Esophagus muscularis mucosa (tissue), 4 donors: ENCODE measurements at regions of chr7 and their contacts with region 1.

Region 1: DNA sequence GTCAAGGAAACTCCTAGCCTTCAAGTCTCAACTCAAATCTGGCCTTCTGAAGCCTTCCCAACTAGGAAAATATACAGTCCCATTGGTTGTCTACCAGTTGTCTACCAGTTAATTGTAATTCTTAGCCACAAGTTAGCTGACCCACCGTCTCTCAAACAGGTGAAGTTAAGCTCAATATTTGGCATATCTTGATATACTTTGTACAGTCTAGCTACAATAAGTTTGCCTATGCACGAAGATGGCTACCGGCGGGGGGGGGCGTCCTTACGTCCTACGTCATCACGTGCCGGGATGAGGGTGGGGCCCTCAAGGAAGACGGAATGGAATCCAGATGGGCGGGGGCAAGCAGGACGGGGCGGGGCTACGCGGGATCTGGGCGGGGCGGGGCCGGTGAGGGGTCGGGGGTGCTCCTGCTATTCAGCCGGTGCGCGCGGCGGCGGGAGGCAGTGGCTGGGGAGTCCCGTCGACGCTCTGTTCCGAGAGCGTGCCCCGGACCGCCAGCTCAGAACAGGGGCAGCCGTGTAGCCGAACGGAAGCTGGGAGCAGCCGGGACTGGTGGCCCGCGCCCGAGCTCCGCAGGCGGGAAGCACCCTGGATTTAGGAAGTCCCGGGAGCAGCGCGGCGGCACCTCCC is at the start of gene AHR:
- DNase-seq: peak; percentile 99
- H3K4me3 ChIP-seq: peak within 1 kb of the TSS; percentile 90 to 98 (median 93)
- H3K27ac ChIP-seq: peak within 1 kb of the TSS; percentile 92 to 97 (median 94)
- H3K4me1 ChIP-seq: peaks cover 11 to 27% (median 19%) of the 10 kb centered on the region in 4 donors
- H3K27me3 ChIP-seq: peaks cover 0 to 4% (median 0%) of the 10 kb centered on the region in 4 donors
- CTCF ChIP-seq: no peak
- EP300 ChIP-seq: no peak
- POLR2A ChIP-seq: peak; percentile 87
- total RNA-seq, gene AHR: 67.3 to 111 (median 77.8) TPM

Region 2: GRCh38 chr7:16634271-16634738 is 664.0 kb before region 1 on chr7:
- intact Hi-C with region 1: loop called (anchors 10 kb)
- DNase-seq: no peak
- H3K4me3 ChIP-seq: peak overlapping the region in 2 of 4 donors; percentile 16 to 37
- H3K27ac ChIP-seq: peak overlapping the region; percentile 39 to 71 (median 62)
- H3K4me1 ChIP-seq: peaks cover 36 to 58% (median 56%) of the 10 kb centered on the region in 4 donors
- H3K27me3 ChIP-seq: no peaks in the 10 kb centered on the region
- CTCF ChIP-seq: no peak
- EP300 ChIP-seq: no peak
- POLR2A ChIP-seq: no peak

Region 3: DNA sequence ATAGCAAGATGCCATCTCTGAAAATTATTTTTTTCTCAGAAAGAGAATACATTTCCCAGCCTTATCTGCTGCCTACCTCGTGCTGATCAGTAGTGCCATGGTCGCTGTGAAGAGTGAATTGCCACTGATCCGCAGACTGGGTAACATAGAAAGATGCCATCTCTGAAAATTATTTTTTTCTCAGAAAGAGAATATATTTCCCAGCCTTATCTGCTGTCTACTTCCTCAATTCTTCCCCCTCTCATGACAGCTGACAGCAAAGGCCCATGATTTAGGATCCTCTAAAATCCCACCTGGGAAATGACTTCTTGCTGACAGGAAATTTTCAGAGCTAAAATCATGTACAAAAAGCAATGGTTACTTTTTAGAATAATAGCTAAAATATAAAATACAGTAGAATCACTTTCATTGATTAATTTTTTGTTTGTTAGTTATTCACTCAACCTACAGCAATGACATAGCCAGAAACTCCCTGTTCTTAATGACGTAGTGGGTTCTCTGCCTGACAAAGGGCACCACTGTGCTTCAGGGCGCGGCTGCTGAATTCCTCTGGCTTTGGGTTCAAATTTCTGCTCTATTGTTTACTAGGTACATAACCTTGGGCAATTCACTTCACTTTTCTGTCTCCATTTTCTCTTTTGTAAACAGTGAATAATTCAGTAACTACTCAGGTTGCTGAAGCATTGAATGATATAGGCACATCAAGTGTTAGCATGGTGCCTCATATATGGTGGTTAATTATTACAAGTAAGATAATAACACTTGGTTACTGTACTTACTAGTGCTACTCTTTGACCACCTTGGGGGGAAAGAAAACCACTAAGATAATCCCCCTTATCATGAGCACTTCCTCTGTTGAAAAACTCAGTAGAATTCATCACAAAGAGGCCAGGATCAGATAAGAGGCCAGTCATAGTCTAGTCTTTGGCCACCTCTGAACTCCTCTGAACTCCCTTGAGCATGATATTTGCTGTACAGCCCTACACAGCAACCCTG is 92.1 kb before region 1 on chr7:
- intact Hi-C with region 1: no loop called
- DNase-seq: no peak
- H3K4me3 ChIP-seq: no peak overlapping the region
- H3K27ac ChIP-seq: no peak overlapping the region
- H3K4me1 ChIP-seq: no peaks in the 10 kb centered on the region
- H3K27me3 ChIP-seq: no peaks in the 10 kb centered on the region
- CTCF ChIP-seq: no peak
- EP300 ChIP-seq: no peak
- POLR2A ChIP-seq: no peak

Region 4: DNA sequence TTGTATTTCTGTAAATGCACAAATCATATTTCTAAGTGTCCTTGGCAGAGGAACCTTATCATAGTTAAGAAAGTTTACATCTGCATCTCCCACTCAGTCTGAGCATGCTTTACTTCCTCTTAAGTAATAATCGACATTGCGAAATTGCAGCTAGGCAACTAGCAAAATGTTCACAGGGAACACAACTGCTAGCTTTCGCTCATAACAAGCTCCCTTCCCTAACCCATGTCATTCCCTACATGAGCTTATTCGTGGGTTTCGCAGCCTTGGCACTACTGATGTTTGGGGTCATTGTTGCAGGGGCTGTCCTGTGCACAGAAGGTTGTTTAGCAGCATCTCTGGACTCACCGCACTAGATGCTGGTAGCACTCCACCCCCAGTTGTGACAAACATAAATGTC is 71.8 kb after region 1 on chr7:
- intact Hi-C with region 1: no loop called
- DNase-seq: no peak
- H3K4me3 ChIP-seq: no peak overlapping the region
- H3K27ac ChIP-seq: peak overlapping the region; percentile 29 to 77 (median 70)
- H3K4me1 ChIP-seq: peaks cover 11 to 66% (median 50%) of the 10 kb centered on the region in 4 donors
- H3K27me3 ChIP-seq: no peaks in the 10 kb centered on the region
- CTCF ChIP-seq: no peak
- EP300 ChIP-seq: no peak
- POLR2A ChIP-seq: no peak

Region 5: DNA sequence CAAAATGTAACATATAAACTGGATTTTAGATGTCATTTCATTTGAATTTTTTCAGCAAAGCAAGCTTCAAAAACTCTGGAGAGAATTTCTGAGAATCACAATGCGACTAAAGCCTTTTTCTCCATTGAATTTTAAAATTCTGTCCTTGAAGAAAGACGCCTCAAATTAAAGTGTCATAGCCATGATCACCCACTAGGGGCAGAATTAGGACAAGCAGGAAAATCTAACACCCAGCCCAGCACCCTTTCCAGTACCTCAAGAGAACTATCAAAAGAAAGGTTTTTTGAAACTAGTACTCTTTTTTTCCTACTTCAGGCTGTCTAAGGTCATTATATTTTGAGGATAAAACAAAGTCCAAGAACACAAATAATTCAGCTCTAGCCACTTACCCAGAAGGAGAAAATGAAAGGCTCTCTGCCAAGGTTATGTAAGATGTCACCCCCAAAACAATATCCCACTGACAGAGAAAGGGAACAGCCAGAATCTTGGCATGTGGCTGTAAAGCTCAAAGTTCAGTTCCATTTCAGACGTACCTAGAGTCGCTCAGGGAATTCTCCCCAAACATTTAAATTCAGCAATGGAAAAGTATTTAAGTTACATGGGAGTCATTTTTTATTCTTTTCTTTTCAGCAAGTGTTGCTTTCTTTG is 342.5 kb after region 1 on chr7:
- intact Hi-C with region 1: loop called (anchors 10 kb)
- DNase-seq: no peak
- H3K4me3 ChIP-seq: no peak overlapping the region
- H3K27ac ChIP-seq: no peak overlapping the region
- H3K4me1 ChIP-seq: peaks cover 0 to 6% (median 3%) of the 10 kb centered on the region in 4 donors
- H3K27me3 ChIP-seq: no peaks in the 10 kb centered on the region
- CTCF ChIP-seq: peak; percentile 42 to 67 (median 51)
- EP300 ChIP-seq: no peak
- POLR2A ChIP-seq: no peak